SK-N-SH (cell line): ENCODE measurements at regions of chr17 and their contacts with region 1.

Region 1: GRCh38 chr17:8073627-8074484 is 13.7 kb downstream of the ALOX12B start:
- DNase-seq: peak; percentile 89
- H3K4me3 ChIP-seq: peak overlapping the region in 1 of 2 experiments; percentile 26; a peak in 1 of 4 replicates
- H3K27ac ChIP-seq: no peak overlapping the region
- H3K4me1 ChIP-seq: peaks cover 0 to 8% of the 10 kb centered on the region in 2 experiments; a peak in 1 of 4 replicates
- H3K27me3 ChIP-seq: peaks cover 64% of the 10 kb centered on the region
- CTCF ChIP-seq: peak; percentile 89
- EP300 ChIP-seq: no peak
- RAD21 ChIP-seq: peak; percentile 41

Region 2: GRCh38 chr17:7856883-7857723 is 216.8 kb before region 1 on chr17 and contains the start of gene NAA38:
- CTCF ChIA-PET with region 1: no interaction called
- POLR2A ChIA-PET with region 1: no interaction called
- DNase-seq: peak; percentile 90
- H3K4me3 ChIP-seq: peak within 1 kb of the TSS; percentile 72 to 77
- H3K27ac ChIP-seq: peak within 1 kb of the TSS; percentile 93 to 100
- H3K4me1 ChIP-seq: peaks cover 23 to 35% of the 10 kb centered on the region in 2 experiments; a peak in 3 of 4 replicates
- H3K27me3 ChIP-seq: no peaks in the 10 kb centered on the region
- CTCF ChIP-seq: peak; percentile 47
- EP300 ChIP-seq: 0 out of 4 replicates have a peak, but pooled peaks of 1 of the 2 experiments have one; percentile 6
- RAD21 ChIP-seq: peak; percentile 38
- polyA plus RNA-seq, gene NAA38: 133 and 202 TPM in 2 replicates

Region 3: DNA sequence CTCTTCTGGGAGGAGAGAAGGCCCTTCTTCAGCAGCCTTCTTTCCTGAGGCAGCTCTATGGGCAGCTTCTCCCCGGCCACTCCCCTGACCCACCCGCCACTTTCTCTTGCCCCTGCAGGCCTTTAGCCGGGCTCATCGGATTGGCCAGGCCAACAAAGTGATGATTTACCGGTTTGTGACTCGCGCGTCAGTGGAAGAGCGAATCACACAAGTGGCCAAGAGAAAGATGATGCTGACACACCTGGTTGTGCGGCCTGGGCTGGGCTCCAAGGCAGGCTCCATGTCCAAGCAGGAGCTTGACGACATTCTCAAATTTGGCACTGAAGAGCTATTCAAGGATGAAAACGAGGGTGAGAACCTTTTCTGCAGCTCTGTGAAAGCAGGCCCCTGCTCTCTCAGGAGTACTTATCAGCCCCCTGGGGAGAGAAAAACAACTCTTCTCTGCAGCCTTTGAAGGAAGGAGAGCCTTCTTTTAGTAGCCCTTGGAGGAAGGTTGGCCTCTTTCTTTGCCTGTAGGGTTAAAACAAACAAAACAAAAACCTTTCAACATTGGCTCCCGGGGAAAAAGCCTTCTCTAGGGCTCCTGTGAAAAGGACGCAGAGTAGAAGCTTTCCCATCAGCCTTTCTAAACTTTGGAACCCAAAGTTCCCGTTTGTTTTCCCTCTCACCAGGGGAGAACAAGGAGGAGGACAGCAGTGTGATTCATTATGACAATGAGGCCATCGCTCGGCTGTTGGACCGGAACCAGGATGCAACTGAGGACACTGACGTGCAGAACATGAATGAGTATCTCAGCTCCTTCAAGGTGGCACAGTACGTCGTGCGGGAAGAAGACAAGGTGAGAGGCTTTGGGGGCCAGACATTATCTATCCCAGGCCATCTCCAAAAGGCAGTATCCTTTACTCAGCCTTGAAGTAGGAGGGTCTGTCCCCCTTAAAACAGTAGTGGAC is 170.4 kb before region 1 on chr17:
- CTCF ChIA-PET with region 1: no interaction called
- POLR2A ChIA-PET with region 1: no interaction called
- DNase-seq: no peak
- H3K4me3 ChIP-seq: no peak overlapping the region
- H3K27ac ChIP-seq: no peak overlapping the region
- H3K4me1 ChIP-seq: no peaks in the 10 kb centered on the region
- H3K27me3 ChIP-seq: no peaks in the 10 kb centered on the region
- CTCF ChIP-seq: no peak
- EP300 ChIP-seq: no peak
- RAD21 ChIP-seq: no peak

Region 4: DNA sequence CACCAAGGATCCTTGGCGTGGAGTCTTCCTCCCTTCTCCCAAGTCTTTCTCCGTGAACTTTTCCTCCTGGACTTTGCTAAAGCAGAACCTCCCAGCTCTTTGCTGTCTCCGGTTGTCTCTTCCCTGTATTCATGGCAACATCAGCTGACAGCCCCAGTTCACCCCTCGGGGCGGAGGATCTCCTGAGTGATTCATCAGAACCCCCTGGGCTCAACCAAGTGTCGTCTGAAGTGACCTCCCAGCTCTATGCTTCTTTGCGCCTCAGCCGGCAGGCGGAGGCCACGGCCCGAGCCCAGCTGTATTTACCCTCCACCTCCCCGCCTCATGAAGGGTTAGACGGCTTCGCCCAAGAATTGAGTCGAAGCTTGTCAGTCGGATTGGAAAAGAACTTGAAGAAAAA is 140.9 kb before region 1 on chr17:
- CTCF ChIA-PET with region 1: no interaction called
- POLR2A ChIA-PET with region 1: no interaction called
- DNase-seq: no peak
- H3K4me3 ChIP-seq: peak overlapping the region; percentile 99 to 100
- H3K27ac ChIP-seq: peak overlapping the region in 1 of 2 experiments; percentile 75; a peak in 2 of 4 replicates
- H3K4me1 ChIP-seq: peaks cover 21 to 38% of the 10 kb centered on the region in 2 experiments; a peak in 3 of 4 replicates
- H3K27me3 ChIP-seq: no peaks in the 10 kb centered on the region
- CTCF ChIP-seq: peak; percentile 33
- EP300 ChIP-seq: no peak
- RAD21 ChIP-seq: no peak

Region 5: DNA sequence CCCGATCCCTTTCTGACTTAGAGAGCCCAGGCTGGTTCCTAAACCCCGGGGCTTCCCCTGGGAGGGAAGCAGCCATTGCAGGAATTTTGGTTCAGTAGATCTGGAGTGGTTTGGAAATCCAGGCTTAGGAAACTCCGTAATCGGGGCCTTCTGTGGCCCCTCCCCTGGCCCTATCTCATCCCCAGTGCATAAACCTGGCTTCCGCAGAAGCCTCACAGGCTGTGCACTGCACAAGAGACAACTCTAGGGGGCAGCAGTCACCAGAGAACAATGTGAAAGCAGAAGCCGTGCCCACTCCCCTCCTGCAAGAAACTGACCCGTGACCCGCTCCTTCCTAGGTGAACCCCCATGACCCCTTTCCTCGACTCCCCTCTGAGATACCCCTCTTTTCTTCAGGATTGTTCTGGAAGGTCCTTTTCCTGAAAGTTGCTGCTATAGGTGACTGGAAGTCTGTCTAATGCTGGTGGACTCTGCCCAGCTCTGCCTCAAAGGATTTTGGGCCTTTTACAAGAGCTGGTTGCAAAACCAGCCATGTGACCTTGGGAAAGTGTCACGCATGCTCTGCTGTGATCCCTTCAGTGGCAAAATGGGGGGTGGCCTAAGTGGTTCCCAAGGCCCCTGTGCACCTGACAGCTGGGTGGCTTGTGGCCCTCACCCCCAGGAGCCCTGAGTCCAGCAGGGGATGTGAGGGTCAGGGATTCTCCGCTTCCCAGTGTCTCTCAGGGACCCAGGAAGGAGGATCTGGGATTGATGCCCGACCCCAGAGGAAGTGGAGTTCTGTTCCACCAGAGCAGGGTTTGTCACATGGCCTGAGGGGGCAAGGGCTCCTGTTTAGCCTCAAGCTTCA is 57.0 kb before region 1 on chr17:
- CTCF ChIA-PET with region 1: interaction called, 23 read pairs
- POLR2A ChIA-PET with region 1: no interaction called
- DNase-seq: peak; percentile 82
- H3K4me3 ChIP-seq: peak overlapping the region; percentile 45 to 53
- H3K27ac ChIP-seq: no peak overlapping the region
- H3K4me1 ChIP-seq: peaks cover 0 to 15% of the 10 kb centered on the region in 2 experiments; a peak in 1 of 4 replicates
- H3K27me3 ChIP-seq: no peaks in the 10 kb centered on the region
- CTCF ChIP-seq: peak; percentile 72
- EP300 ChIP-seq: no peak
- RAD21 ChIP-seq: peak; percentile 76

Region 6: GRCh38 chr17:8091033-8091687 is 17.3 kb after region 1 on chr17:
- CTCF ChIA-PET with region 1: interaction called, 158 read pairs
- POLR2A ChIA-PET with region 1: no interaction called
- DNase-seq: no peak
- H3K4me3 ChIP-seq: no peak overlapping the region
- H3K27ac ChIP-seq: no peak overlapping the region
- H3K4me1 ChIP-seq: no peaks in the 10 kb centered on the region
- H3K27me3 ChIP-seq: peaks cover 62% of the 10 kb centered on the region; the same call in 1 of the 2 replicates
- CTCF ChIP-seq: no peak
- EP300 ChIP-seq: no peak
- RAD21 ChIP-seq: no peak

Region 7: DNA sequence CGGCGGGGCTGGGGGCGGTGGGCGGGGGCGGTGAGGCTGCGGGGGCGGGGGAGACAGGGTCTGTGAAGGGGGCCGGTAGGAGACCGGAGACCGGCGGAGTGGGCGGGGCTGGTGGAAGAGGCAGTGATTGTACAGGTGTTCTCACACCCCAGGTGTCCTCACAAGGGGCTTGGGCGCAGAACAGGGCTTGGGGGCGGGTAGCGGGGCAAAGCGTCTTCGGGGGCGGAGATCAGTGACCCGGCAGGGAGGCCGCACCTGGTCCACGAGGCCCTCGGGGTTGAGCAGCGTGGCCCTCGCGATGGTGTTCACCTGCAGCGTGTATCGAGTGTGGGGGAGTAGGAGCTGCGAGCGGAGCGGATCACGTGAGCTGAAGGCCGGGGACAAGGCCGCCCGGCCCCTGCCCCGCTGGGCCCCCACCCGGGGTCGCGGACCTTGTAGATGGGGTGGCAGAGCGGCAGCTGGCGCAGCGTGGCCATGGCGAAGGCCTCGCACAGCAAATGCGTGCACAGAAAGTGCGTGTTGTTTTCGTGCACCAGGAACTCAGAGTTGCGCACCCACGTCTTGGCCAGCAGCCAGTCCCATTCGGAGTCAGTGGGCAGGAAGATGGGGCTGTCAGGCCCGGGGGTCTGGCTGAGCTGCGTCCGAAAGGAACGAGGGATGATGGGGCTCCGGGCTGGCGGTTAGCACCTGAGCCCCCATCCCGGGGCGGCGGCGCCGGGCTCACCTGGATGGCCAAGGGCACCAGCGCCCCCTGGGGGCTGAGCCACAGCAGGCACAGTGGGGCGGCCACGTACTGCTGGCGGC is 36.0 kb after region 1 on chr17:
- CTCF ChIA-PET with region 1: interaction called, 63 read pairs
- POLR2A ChIA-PET with region 1: no interaction called
- DNase-seq: peak; percentile 84
- H3K4me3 ChIP-seq: peak overlapping the region in 1 of 2 experiments; percentile 37; a peak in 1 of 4 replicates
- H3K27ac ChIP-seq: no peak overlapping the region
- H3K4me1 ChIP-seq: no peaks in the 10 kb centered on the region; a peak in 1 of 4 replicates
- H3K27me3 ChIP-seq: peaks cover 21% of the 10 kb centered on the region; the same call in 1 of the 2 replicates
- CTCF ChIP-seq: peak; percentile 68
- EP300 ChIP-seq: no peak
- RAD21 ChIP-seq: peak; percentile 52